ENCODE measurements at regions of chr2 and their contacts with region 1.

Region 1: GRCh38 chr2:55268907-55269644 is at the start of gene MTIF2:
- DNase-seq: peak; percentile 82
- H3K4me3 Mint-ChIP-seq: peak within 1 kb of the TSS; percentile 97
- H3K27ac Mint-ChIP-seq: peak within 1 kb of the TSS; percentile 92
- H3K4me1 Mint-ChIP-seq: peaks cover 15% of the 10 kb centered on the region
- H3K27me3 Mint-ChIP-seq: no peaks in the 10 kb centered on the region
- total RNA-seq, gene MTIF2: 40.2 and 42.7 TPM in 2 replicates

Region 2: GRCh38 chr2:55311444-55311870 is 42.4 kb after region 1 on chr2:
- intact Hi-C with region 1: loop called (anchors 1 kb)
- DNase-seq: no peak
- H3K4me3 Mint-ChIP-seq: no peak overlapping the region
- H3K27ac Mint-ChIP-seq: peak overlapping the region; percentile 43
- H3K4me1 Mint-ChIP-seq: peaks cover 22% of the 10 kb centered on the region
- H3K27me3 Mint-ChIP-seq: no peaks in the 10 kb centered on the region

Measured in activated T-helper 2 cell treated with anti-CD3 and anti-CD28 coated beads, Interferon-gamma antibody, Interleukin-2, Interleukin-4, amounts not matched to agents 10 μg/mL and 5 μg/mL and 100 μg/mL, durations not matched to agents 14 hours and 24 hours and 36 hours (primary cell).